Activated CD8-positive, alpha-beta memory T cell treated with anti-CD3 and anti-CD28 coated beads, Interleukin-2, amount 10 ng/mL, durations not matched to agents 7 days and 5 days (primary cell): ENCODE measurements at regions of chr12 and their contacts with region 1.

Region 1: GRCh38 chr12:106223485-106224354 is 24.1 kb downstream of the CKAP4 start:
- DNase-seq: peak; percentile 80
- ATAC-seq: peak; percentile 68
- H3K4me3 Mint-ChIP-seq: no peak overlapping the region
- H3K27ac Mint-ChIP-seq: no peak overlapping the region
- H3K4me1 Mint-ChIP-seq: peaks cover 22% of the 10 kb centered on the region
- H3K27me3 Mint-ChIP-seq: peaks cover 4% of the 10 kb centered on the region

Region 2: GRCh38 chr12:106251631-106252455 is 28.1 kb after region 1 on chr12:
- CTCF ChIA-PET with region 1: interaction called, 11 read pairs
- DNase-seq: peak; percentile 31
- ATAC-seq: no peak
- H3K4me3 Mint-ChIP-seq: no peak overlapping the region
- H3K27ac Mint-ChIP-seq: no peak overlapping the region
- H3K4me1 Mint-ChIP-seq: peaks cover 7% of the 10 kb centered on the region
- H3K27me3 Mint-ChIP-seq: peaks cover 19% of the 10 kb centered on the region

Region 3: DNA sequence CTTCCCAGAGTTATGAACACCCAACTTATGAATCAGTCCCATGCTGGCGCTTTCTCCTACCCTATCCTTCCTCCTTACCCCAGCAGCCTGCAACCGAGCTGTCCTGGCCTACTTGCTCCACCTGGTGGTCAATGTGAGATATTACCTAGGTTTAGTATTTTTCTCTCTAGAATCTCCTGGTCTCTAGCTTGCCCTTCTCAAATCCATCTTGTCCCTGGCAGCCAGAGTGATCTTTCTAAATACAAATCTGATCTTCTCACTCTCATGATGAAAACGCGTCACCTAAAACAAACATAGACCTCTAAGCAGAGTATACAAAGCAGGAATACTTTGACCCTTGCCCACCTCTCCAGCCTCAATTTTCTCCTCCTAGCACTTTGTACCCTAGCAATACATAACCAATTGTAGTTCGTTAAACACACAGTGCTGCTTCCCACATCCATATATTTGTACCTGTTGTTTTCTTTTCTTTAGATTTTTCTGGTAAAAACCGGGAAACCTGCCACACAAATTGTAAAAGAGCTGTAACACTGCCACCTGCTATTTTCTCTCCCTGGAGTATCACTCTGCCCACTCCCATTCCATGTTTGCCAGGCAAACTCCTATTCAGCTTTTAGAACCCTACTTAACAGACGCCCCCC is 58.9 kb after region 1 on chr12:
- CTCF ChIA-PET with region 1: interaction called, 129 read pairs
- DNase-seq: peak; percentile 50
- ATAC-seq: peak; percentile 70
- H3K4me3 Mint-ChIP-seq: no peak overlapping the region
- H3K27ac Mint-ChIP-seq: no peak overlapping the region
- H3K4me1 Mint-ChIP-seq: peaks cover 6% of the 10 kb centered on the region
- H3K27me3 Mint-ChIP-seq: peaks cover 21% of the 10 kb centered on the region

Region 4: DNA sequence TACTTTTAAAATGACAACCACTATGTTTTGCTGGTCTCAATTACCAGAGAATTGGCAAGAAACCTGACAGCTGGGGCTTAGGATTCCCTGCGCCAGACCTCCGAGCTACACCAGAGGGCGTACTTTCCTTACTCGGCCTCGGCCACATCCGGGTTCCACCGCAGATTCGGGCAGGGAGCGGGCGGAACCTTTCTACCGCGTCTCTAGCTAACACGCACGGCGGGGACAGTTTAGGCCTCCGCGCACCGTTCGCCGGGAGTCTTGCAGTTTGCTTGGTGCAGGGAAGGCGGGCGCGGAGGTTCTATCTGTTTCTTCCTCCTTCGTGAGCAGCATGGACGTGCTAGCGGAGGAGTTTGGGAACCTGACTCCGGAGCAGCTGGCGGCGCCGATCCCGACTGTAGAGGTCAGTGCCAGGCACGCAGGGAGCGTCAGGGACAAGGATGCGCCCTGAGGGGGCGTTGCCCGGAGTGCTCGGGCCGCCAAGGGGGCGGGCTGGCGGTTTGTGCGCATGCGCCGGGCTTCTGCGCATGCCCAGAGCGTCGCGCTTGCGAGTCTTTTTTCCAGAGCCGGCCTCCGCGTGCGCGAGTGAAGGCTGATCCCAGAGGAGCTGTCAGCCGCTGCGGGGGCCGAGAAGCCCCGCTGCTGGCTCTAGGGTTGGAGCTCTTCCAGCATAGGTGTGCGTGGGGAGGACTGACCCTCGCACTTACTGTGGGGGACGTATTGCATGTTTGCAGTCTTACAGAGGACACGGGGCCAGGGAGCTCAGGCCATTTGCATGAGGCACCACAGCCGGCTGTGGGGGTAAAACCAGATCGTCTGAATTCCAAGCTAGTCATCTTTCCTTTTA is 134.1 kb after region 1 on chr12 and contains the start of gene POLR3B:
- CTCF ChIA-PET with region 1: interaction called, 17 read pairs
- DNase-seq: peak; percentile 97
- ATAC-seq: peak; percentile 91
- H3K4me3 Mint-ChIP-seq: peak within 1 kb of the TSS; percentile 86
- H3K27ac Mint-ChIP-seq: peak within 1 kb of the TSS; percentile 89
- H3K4me1 Mint-ChIP-seq: peaks cover 13% of the 10 kb centered on the region
- H3K27me3 Mint-ChIP-seq: no peaks in the 10 kb centered on the region
- total RNA-seq, gene POLR3B: 3.7 to 6.3 TPM